ENCODE measurements at regions of chr5 and their contacts with region 1.

Region 1: GRCh38 chr5:56123531-56124243 is 109.4 kb downstream of the ANKRD55 start:
- DNase-seq: peak; percentile 78
- H3K4me3 ChIP-seq: no peak overlapping the region
- H3K27ac ChIP-seq: peak overlapping the region; percentile 36
- H3K4me1 ChIP-seq: peaks cover 15% of the 10 kb centered on the region
- H3K27me3 ChIP-seq: no peaks in the 10 kb centered on the region
- CTCF ChIP-seq: no peak

Region 2: GRCh38 chr5:55608595-55609349 is 514.9 kb before region 1 on chr5:
- CTCF ChIA-PET with region 1: no interaction called
- dilution Hi-C with region 1: no loop called
- in situ Hi-C with region 1: no loop called
- intact Hi-C with region 1: no loop called
- DNase-seq: no peak
- H3K4me3 ChIP-seq: no peak overlapping the region
- H3K27ac ChIP-seq: no peak overlapping the region
- H3K4me1 ChIP-seq: peaks cover 7% of the 10 kb centered on the region
- H3K27me3 ChIP-seq: no peaks in the 10 kb centered on the region
- CTCF ChIP-seq: no peak

Region 3: DNA sequence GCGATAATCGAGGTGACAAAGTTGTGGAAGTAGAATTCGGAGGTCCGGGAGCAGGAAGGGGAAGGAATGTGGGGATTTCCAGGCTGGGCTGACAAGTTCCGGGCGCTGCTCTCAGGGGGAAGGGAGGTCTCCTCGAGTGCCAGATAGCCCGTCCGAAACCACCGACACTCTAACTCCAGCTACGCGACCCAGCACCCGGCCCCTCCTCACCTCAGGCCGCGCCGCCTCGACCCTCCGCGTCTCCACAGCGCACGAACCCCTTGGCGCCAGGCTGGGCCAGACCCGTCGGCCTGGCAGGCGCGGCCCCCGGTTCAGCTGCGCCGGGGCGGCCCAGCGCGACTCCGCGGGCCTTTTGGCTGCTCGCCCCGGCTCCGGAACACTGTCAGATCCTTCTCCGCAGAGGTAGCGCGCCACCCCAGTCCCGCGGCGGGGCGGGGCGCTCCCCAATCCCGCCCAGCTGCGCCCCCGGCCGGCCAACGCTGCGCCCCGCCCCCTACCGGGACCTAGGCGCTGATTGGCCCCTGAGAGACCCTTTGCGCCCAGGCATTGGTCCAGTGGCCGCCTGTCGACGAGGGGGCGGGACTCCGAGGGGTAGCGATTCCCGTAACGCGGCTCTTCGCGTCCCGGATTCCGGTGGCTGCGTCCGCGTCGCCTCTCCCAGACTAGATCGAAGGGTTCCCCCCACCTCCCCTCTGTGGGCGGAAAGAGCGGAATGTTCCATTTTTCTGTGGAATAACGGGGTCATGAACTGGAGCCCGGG is 128.9 kb before region 1 on chr5 and contains the start of gene IL6ST:
- CTCF ChIA-PET with region 1: no interaction called
- dilution Hi-C with region 1: no loop called
- in situ Hi-C with region 1: no loop called
- intact Hi-C with region 1: loop called (anchors 5 kb)
- DNase-seq: peak; percentile 96
- H3K4me3 ChIP-seq: peak within 1 kb of the TSS; percentile 91 to 100 (median 99)
- H3K27ac ChIP-seq: peak within 1 kb of the TSS; percentile 99
- H3K4me1 ChIP-seq: peaks cover 30% of the 10 kb centered on the region
- H3K27me3 ChIP-seq: no peaks in the 10 kb centered on the region
- CTCF ChIP-seq: peak in 1 of 2 donors; percentile 12
- total RNA-seq, gene IL6ST: 103 to 108 TPM

Region 4: GRCh38 chr5:56168066-56168478 is 44.4 kb after region 1 on chr5:
- CTCF ChIA-PET with region 1: no interaction called
- dilution Hi-C with region 1: loop called (anchors 5 kb)
- in situ Hi-C with region 1: no loop called
- intact Hi-C with region 1: no loop called
- DNase-seq: no peak
- H3K4me3 ChIP-seq: no peak overlapping the region
- H3K27ac ChIP-seq: no peak overlapping the region
- H3K4me1 ChIP-seq: no peaks in the 10 kb centered on the region
- H3K27me3 ChIP-seq: no peaks in the 10 kb centered on the region
- CTCF ChIP-seq: no peak